ENCODE measurements at regions of chr9 and their contacts with region 1.

Region 1: GRCh38 chr9:136482793-136483588 is at the start of gene SEC16A:
- DNase-seq: peak; percentile 95 to 98 (median 98)
- H3K4me3 ChIP-seq: peak within 1 kb of the TSS; percentile 81 to 95 (median 92)
- H3K27ac ChIP-seq: peak within 1 kb of the TSS; percentile 90 to 96
- H3K4me1 ChIP-seq: peaks cover 7 to 47% (median 31%) of the 10 kb centered on the region in 4 experiments
- H3K27me3 ChIP-seq: no peaks in the 10 kb centered on the region

Region 2: GRCh38 chr9:136511670-136512592 is 28.9 kb after region 1 on chr9:
- CTCF ChIA-PET with region 1: interaction called, 20 read pairs
- POLR2A ChIA-PET with region 1: no interaction called
- DNase-seq: no peak
- H3K4me3 ChIP-seq: no peak overlapping the region
- H3K27ac ChIP-seq: peak overlapping the region in 1 of 2 experiments; percentile 43
- H3K4me1 ChIP-seq: no peaks in the 10 kb centered on the region
- H3K27me3 ChIP-seq: no peaks in the 10 kb centered on the region

Region 3: DNA sequence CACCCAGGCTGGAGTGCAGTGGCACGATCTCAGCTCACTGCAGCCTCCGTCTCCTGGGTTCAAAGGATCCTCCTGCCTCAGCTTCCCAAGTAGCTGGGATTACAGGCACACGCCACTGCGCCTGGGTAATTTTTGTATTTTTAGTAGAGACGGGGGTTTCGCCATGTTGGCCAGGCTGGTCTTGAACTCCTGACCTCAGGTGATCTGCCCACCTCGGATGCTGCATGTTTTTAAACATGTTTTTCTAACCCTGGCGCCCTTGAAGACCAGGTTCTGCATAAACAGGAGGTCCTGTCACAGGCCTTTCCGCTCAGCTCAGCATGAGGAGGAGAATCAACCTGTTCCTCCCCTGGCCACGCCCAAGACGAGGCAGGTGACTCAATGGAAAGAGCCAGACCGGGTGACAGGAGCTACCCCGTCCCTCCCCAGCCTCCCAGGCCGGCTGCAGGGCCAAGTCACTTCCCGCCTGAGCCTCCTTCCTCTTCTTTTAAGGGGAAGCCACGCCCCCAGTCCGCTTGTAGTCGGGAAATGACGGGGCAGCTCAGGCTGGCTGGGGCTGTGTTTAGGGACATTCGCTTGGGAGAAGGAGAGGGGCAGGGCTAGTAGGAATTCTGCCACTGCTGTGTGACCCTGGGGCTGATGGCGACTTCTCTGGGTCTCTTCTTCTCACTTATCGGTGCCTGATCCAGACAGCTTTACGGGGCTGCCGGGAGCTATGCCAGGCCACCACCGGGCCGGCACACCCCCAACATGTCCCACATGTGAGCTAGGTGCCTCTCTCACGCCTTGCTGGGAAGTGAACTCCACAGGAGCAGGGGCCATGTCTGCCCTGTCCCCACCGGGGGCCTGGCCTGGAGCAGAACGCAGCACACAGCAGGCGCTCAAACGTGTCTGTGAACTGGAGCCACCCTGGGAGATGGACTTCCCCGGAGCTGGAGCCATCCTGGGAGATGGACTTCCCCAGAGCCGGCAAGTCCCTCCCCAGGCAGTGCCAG is 56.7 kb after region 1 on chr9:
- CTCF ChIA-PET with region 1: interaction called, 93 read pairs
- POLR2A ChIA-PET with region 1: no interaction called
- DNase-seq: peak; percentile 91 to 96 (median 95)
- H3K4me3 ChIP-seq: peak overlapping the region in 5 of 7 experiments; percentile 40 to 70 (median 52)
- H3K27ac ChIP-seq: peak overlapping the region; percentile 46 to 84
- H3K4me1 ChIP-seq: peaks cover 0 to 95% (median 92%) of the 10 kb centered on the region in 4 experiments
- H3K27me3 ChIP-seq: no peaks in the 10 kb centered on the region

Region 4: DNA sequence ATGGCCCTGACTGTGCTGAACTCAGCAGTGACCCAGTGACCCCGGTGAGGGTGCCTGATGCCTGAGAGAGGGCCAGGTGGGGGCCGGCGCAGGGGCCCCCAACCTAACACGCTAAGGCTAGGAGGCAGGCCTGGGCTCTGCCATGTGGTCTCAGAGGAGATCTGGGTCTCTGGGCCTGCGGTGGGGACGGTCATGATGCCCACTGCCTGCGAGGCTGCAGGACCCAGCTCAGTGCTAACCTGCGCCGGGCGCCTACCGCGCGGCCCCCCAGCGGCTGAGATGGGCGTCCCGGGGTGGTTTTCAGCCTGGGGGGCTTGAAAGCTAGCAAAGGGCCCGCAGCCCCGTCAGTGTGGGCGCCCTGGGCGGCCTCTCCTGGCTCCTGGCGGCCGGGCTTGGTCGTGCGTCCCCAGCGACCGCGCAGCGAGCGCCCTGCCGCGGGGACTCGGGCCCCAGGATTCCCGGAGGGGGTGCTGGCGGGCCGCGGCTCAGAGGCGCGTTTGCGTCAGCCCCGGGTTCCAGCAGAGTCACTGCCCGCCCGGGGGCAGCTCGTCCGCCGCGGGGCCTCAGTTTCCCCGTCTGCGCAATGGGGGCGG is 182.2 kb after region 1 on chr9:
- CTCF ChIA-PET with region 1: interaction called, 15 read pairs
- POLR2A ChIA-PET with region 1: no interaction called
- DNase-seq: peak in 2 of 3 donors; percentile 66 to 73
- H3K4me3 ChIP-seq: peak overlapping the region; percentile 49 to 94 (median 88)
- H3K27ac ChIP-seq: peak overlapping the region; percentile 93
- H3K4me1 ChIP-seq: peaks cover 0 to 92% (median 88%) of the 10 kb centered on the region in 4 experiments
- H3K27me3 ChIP-seq: no peaks in the 10 kb centered on the region